GM12878 (cell line): ENCODE measurements at regions of chr6 and their contacts with region 1.

Region 1: GRCh38 chr6:27040244-27040981 is 207.1 kb upstream of the PRSS16 start:
- DNase-seq: no peak
- ATAC-seq: peak; percentile 66
- H3K4me3 ChIP-seq: no peak overlapping the region
- H3K27ac ChIP-seq: no peak overlapping the region
- H3K4me1 ChIP-seq: peaks cover 3% of the 10 kb centered on the region; the same call in 1 of the 2 replicates
- H3K27me3 ChIP-seq: no peaks in the 10 kb centered on the region
- CTCF ChIP-seq: no peak; a peak in 1 of 6 replicates
- EP300 ChIP-seq: no peak
- POLR2A ChIP-seq: no peak
- RAD21 ChIP-seq: no peak

Region 2: GRCh38 chr6:26421259-26422144 is 618.9 kb before region 1 on chr6:
- CTCF ChIA-PET with region 1: no interaction called
- POLR2A ChIA-PET with region 1: no interaction called
- RAD21 ChIA-PET with region 1: no interaction called
- SMC1A ChIA-PET with region 1: no interaction called
- in situ Hi-C with region 1: no loop called
- intact Hi-C with region 1: no loop called
- DNase-seq: peak; percentile 43
- ATAC-seq: peak; percentile 98
- H3K4me3 ChIP-seq: peak overlapping the region; percentile 69
- H3K27ac ChIP-seq: peak overlapping the region; percentile 54
- H3K4me1 ChIP-seq: peaks cover 4% of the 10 kb centered on the region; the same call in 1 of the 2 replicates
- H3K27me3 ChIP-seq: no peaks in the 10 kb centered on the region
- CTCF ChIP-seq: no peak
- EP300 ChIP-seq: no peak
- POLR2A ChIP-seq: 0 out of 2 replicates have a peak, but pooled peaks have one; percentile 36
- RAD21 ChIP-seq: no peak

Region 3: DNA sequence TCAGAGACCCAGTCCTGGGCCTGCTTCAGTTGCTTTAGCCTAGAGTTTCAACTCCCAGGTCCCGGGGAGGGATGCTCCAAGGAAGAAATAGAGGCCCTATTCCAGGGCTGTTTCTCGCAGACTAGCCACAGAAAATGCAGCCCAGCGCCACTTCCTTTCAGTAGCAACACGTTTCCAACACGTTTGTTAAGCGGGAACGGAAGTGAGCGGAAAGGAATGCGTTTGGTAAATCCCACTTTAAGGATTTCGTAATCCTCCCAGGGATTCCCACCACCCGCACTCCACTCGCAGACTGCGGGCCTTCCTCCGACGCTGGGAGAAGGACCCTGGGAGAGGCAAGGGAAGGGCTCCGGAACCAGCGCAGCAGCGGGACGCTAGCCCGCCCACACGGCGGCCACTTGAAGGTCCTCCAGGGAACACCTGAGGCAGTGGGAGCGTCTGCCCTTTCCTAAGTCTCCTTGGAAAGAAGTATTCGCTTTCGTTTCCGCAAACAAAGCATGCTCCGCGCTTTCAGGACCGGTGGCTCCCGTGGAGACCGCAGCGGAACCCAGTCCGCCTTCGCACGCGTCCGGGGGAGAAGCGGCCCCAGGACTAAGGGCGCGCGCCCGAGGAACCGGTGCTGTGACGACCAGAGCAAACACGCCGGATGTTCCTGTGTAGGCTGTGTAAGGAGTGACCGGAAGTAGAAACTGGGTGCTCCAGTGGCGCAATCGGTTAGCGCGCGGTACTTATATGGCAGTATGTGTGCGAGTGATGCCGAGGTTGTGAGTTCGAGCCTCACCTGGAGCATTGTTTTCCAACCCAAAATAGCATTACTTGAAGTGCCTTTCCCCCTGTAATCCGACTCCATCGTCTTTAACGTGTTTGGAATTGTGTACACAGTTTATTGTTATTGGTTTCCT is 20.5 kb before region 1 on chr6:
- CTCF ChIA-PET with region 1: interaction called, 4 read pairs
- POLR2A ChIA-PET with region 1: interaction called, 10 read pairs
- RAD21 ChIA-PET with region 1: interaction called, 3 read pairs
- SMC1A ChIA-PET with region 1: interaction called, 9 read pairs
- in situ Hi-C with region 1: no loop called
- intact Hi-C with region 1: no loop called
- DNase-seq: peak; percentile 62
- ATAC-seq: peak; percentile 98
- H3K4me3 ChIP-seq: peak overlapping the region; percentile 60
- H3K27ac ChIP-seq: peak overlapping the region; percentile 80
- H3K4me1 ChIP-seq: no peaks in the 10 kb centered on the region; the same call in 1 of the 2 replicates
- H3K27me3 ChIP-seq: no peaks in the 10 kb centered on the region
- CTCF ChIP-seq: no peak
- EP300 ChIP-seq: no peak
- POLR2A ChIP-seq: peak; percentile 87
- RAD21 ChIP-seq: no peak